CD4-positive, alpha-beta T cell (primary cell): ENCODE measurements at regions of chr2 and their contacts with region 1.

Region 1: GRCh38 chr2:71226965-71227560 is at the start of gene PAIP2B:
- DNase-seq: peak; percentile 96 to 99 (median 98)
- ATAC-seq: peak; percentile 89
- H3K4me3 ChIP-seq: peak within 1 kb of the TSS; percentile 70
- H3K4me3 Mint-ChIP-seq: peak within 1 kb of the TSS; percentile 90
- H3K27ac ChIP-seq: peak within 1 kb of the TSS; percentile 42 to 64
- H3K27ac Mint-ChIP-seq: peak within 1 kb of the TSS; percentile 84
- H3K4me1 ChIP-seq: peaks cover 15% of the 10 kb centered on the region
- H3K4me1 Mint-ChIP-seq: peaks cover 28% of the 10 kb centered on the region
- H3K27me3 ChIP-seq: no peaks in the 10 kb centered on the region
- H3K27me3 Mint-ChIP-seq: peaks cover 12% of the 10 kb centered on the region
- CTCF ChIP-seq: no peak
- total RNA-seq, gene PAIP2B: 2.3 to 2.5 TPM

Region 2: GRCh38 chr2:71068218-71069035 is 158.6 kb before region 1 on chr2 and contains the start of gene NAGK:
- CTCF ChIA-PET with region 1: no interaction called
- POLR2A ChIA-PET with region 1: interaction called, 27 read pairs
- intact Hi-C with region 1: loop called (anchors 1 to 2 kb)
- DNase-seq: peak; percentile 94 to 99 (median 97)
- ATAC-seq: peak; percentile 78
- H3K4me3 ChIP-seq: peak within 1 kb of the TSS; percentile 97
- H3K4me3 Mint-ChIP-seq: peak within 1 kb of the TSS; percentile 99
- H3K27ac ChIP-seq: peak within 1 kb of the TSS; percentile 91 to 98
- H3K27ac Mint-ChIP-seq: peak within 1 kb of the TSS; percentile 99
- H3K4me1 ChIP-seq: peaks cover 56% of the 10 kb centered on the region
- H3K4me1 Mint-ChIP-seq: peaks cover 68% of the 10 kb centered on the region
- H3K27me3 ChIP-seq: no peaks in the 10 kb centered on the region
- H3K27me3 Mint-ChIP-seq: no peaks in the 10 kb centered on the region
- CTCF ChIP-seq: no peak
- total RNA-seq, gene NAGK: 62.3 to 73.3 TPM

Region 3: DNA sequence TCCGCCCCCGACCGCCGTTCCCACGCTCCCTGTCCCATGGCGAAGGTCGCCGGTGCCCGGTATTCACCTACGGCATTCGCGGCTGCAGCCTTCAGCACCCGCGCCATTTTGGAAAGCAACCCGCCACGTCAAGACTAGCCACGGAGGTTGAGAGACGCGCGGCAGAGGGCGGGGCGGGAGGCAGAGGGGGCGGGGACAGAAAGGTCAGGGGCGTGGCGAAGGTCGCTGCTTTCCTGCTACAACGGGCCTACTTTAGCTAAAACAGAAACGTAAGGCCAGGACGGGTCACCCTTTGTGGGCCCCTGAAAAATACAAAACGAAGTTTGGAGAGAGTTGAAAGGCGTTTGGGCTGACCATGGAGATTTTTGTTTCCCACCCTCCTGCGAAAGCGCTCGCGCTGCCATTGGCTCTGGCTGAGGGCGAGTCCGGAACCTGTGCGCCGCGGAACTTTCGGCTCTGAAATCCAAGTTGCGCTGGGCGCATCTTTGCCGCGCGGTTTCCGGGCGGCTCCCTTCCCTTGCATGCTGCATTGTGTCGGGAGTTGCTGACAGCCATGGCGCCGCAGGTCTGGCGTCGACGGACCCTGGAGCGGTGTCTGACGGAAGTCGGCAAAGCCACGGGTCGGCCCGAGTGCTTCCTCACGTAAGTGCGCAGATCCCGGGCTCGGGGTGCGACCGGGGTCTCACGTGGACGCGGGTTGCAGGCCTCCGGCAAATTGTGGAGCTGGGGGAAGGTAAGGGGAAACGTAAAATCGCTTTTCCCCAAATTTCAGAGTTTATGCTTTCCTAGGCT is 96.8 kb before region 1 on chr2 and contains the starts of genes MCEE and MPHOSPH10:
- CTCF ChIA-PET with region 1: no interaction called
- POLR2A ChIA-PET with region 1: interaction called, 24 read pairs
- intact Hi-C with region 1: loop called in 1 of 2 experiments (anchors 2 kb)
- DNase-seq: peak; percentile 82 to 94 (median 88)
- ATAC-seq: peak; percentile 89
- H3K4me3 ChIP-seq: peak within 1 kb of the TSS; percentile 95
- H3K4me3 Mint-ChIP-seq: no peak within 1 kb of the TSS
- H3K27ac ChIP-seq: peak within 1 kb of the TSS; percentile 77 to 89
- H3K27ac Mint-ChIP-seq: no peak within 1 kb of the TSS
- H3K4me1 ChIP-seq: peaks cover 24% of the 10 kb centered on the region
- H3K4me1 Mint-ChIP-seq: peaks cover 36% of the 10 kb centered on the region
- H3K27me3 ChIP-seq: no peaks in the 10 kb centered on the region
- H3K27me3 Mint-ChIP-seq: no peaks in the 10 kb centered on the region
- CTCF ChIP-seq: no peak
- total RNA-seq, gene MCEE: 4.3 to 8.0 TPM
- total RNA-seq, gene MPHOSPH10: 36.7 to 38.2 TPM

Region 4: GRCh38 chr2:71276311-71277146 is 49.5 kb after region 1 on chr2:
- CTCF ChIA-PET with region 1: interaction called, 3 read pairs
- POLR2A ChIA-PET with region 1: interaction called, 11 read pairs
- intact Hi-C with region 1: loop called (anchors 1 to 2 kb)
- DNase-seq: peak; percentile 65 to 90 (median 80)
- ATAC-seq: peak; percentile 100
- H3K4me3 ChIP-seq: peak overlapping the region; percentile 58
- H3K4me3 Mint-ChIP-seq: peak overlapping the region; percentile 78
- H3K27ac ChIP-seq: no peak overlapping the region
- H3K27ac Mint-ChIP-seq: no peak overlapping the region
- H3K4me1 ChIP-seq: peaks cover 21% of the 10 kb centered on the region
- H3K4me1 Mint-ChIP-seq: peaks cover 11% of the 10 kb centered on the region
- H3K27me3 ChIP-seq: peaks cover 31 to 53% of the 10 kb centered on the region in 2 experiments
- H3K27me3 Mint-ChIP-seq: peaks cover 94% of the 10 kb centered on the region
- CTCF ChIP-seq: no peak

Region 5: GRCh38 chr2:71423817-71424420 is 196.9 kb after region 1 on chr2:
- CTCF ChIA-PET with region 1: no interaction called
- POLR2A ChIA-PET with region 1: no interaction called
- intact Hi-C with region 1: loop called in 1 of 2 experiments (anchors 10 kb)
- DNase-seq: no peak
- ATAC-seq: no peak
- H3K4me3 ChIP-seq: no peak overlapping the region
- H3K4me3 Mint-ChIP-seq: no peak overlapping the region
- H3K27ac ChIP-seq: no peak overlapping the region
- H3K27ac Mint-ChIP-seq: no peak overlapping the region
- H3K4me1 ChIP-seq: no peaks in the 10 kb centered on the region
- H3K4me1 Mint-ChIP-seq: peaks cover 26% of the 10 kb centered on the region
- H3K27me3 ChIP-seq: no peaks in the 10 kb centered on the region
- H3K27me3 Mint-ChIP-seq: no peaks in the 10 kb centered on the region
- CTCF ChIP-seq: no peak

Region 6: GRCh38 chr2:72236445-72237067 is 1009.5 kb after region 1 on chr2:
- CTCF ChIA-PET with region 1: no interaction called
- POLR2A ChIA-PET with region 1: no interaction called
- intact Hi-C with region 1: no loop called
- DNase-seq: no peak
- ATAC-seq: no peak
- H3K4me3 ChIP-seq: no peak overlapping the region
- H3K4me3 Mint-ChIP-seq: no peak overlapping the region
- H3K27ac ChIP-seq: no peak overlapping the region
- H3K27ac Mint-ChIP-seq: no peak overlapping the region
- H3K4me1 ChIP-seq: no peaks in the 10 kb centered on the region
- H3K4me1 Mint-ChIP-seq: peaks cover 5% of the 10 kb centered on the region
- H3K27me3 ChIP-seq: no peaks in the 10 kb centered on the region
- H3K27me3 Mint-ChIP-seq: no peaks in the 10 kb centered on the region
- CTCF ChIP-seq: no peak